ENCODE measurements at regions of chr2 and their contacts with region 1.

Region 1: GRCh38 chr2:172806493-172806892 is 70.8 kb downstream of the RAPGEF4 start:
- DNase-seq: no peak
- ATAC-seq: no peak
- H3K4me3 Mint-ChIP-seq: no peak overlapping the region
- H3K27ac Mint-ChIP-seq: no peak overlapping the region
- H3K4me1 Mint-ChIP-seq: no peaks in the 10 kb centered on the region
- H3K27me3 Mint-ChIP-seq: peaks cover 13% of the 10 kb centered on the region

Region 2: DNA sequence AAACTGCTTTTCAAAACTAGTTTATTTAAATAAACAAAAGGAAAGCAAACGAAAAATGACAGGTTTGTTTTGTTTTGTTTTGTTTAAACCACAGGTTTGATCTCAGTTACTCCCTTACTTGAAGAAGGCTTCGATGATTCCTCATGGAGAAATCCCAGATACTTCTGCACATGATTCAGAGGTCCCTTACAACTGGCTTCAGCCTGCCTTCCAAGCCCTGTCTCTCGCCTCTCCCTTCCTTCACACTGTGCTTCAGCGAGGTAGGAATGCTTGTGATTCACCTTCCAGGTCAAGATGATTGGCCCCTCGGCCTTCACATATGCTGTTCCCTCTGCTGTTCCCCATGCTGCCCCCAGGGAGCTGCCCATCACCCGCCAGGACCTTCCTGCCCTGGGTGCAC is 483.2 kb before region 1 on chr2:
- CTCF ChIA-PET with region 1: no interaction called
- DNase-seq: no peak
- ATAC-seq: no peak
- H3K4me3 Mint-ChIP-seq: no peak overlapping the region
- H3K27ac Mint-ChIP-seq: no peak overlapping the region
- H3K4me1 Mint-ChIP-seq: no peaks in the 10 kb centered on the region
- H3K27me3 Mint-ChIP-seq: no peaks in the 10 kb centered on the region

Region 3: GRCh38 chr2:172783091-172783898 is 23.2 kb before region 1 on chr2:
- CTCF ChIA-PET with region 1: no interaction called
- DNase-seq: no peak
- ATAC-seq: no peak
- H3K4me3 Mint-ChIP-seq: no peak overlapping the region
- H3K27ac Mint-ChIP-seq: no peak overlapping the region
- H3K4me1 Mint-ChIP-seq: no peaks in the 10 kb centered on the region
- H3K27me3 Mint-ChIP-seq: peaks cover 18% of the 10 kb centered on the region

Region 4: DNA sequence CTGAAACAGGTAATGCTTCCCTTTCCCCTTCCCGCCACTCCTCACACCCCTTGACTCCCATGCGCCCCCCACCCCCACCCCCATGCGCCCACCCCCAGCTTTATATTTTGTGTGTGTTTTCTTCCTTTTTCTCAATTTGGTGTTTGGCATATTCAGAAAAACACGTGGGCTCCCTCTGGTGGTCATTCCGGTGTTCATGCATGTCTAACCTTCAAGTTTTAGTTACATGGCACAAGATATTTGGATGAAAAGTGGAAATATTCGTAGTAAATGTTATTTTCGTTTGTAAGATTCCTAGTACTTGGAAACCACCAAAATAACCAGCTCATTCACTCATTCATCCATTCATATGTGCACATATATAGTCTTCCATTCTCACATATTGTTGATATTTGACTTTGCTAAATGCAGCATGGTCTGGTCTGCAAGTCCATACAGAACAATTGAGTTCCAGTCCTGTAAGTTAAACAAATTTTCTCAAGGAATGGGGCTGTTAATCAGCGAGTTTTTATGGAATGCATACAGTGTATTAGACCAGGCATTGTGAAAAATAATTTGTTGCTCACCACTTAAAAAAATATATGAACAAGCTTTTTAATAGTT is 125.5 kb after region 1 on chr2:
- CTCF ChIA-PET with region 1: interaction called, 29 read pairs
- DNase-seq: peak; percentile 67
- ATAC-seq: no peak
- H3K4me3 Mint-ChIP-seq: no peak overlapping the region
- H3K27ac Mint-ChIP-seq: no peak overlapping the region
- H3K4me1 Mint-ChIP-seq: peaks cover 1% of the 10 kb centered on the region
- H3K27me3 Mint-ChIP-seq: peaks cover 28% of the 10 kb centered on the region

Region 5: DNA sequence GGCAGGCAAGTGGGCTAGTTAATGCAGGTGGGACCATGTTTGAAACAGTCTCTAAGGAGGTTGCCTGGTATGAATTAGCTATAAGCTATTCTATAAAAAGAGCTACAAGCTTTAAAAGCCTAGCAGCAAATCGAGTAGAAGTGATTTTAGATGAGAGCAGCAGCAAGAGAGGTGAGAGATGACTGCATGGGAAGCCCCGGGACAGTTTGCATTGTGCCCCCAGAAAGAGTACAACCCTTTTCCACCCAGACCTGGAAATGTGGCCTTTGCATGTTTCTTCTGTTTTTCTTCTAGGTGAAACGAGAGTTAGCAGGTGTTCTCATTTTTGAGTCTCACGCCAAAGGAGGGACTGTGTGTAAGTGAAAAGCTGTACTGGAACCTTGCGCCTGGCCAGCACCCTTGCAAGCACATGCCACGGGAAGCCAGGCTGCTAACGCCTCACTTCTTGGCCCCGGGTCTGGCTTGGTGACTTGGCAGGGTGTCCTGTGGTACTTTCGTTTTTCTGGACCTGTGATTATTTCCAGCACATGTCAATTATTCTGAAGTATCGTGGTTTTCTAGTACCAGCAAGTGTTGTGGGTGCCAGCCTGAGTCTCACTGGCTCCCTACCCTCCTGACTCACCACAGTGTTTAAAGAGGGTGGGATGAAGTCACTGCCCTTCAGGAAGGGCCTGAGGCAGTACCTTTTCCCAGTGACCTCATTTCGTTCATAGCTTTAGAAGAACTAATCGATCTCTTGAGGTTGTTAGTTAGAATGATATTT is 178.8 kb after region 1 on chr2:
- CTCF ChIA-PET with region 1: no interaction called
- DNase-seq: no peak
- ATAC-seq: no peak
- H3K4me3 Mint-ChIP-seq: no peak overlapping the region
- H3K27ac Mint-ChIP-seq: no peak overlapping the region
- H3K4me1 Mint-ChIP-seq: peaks cover 9% of the 10 kb centered on the region
- H3K27me3 Mint-ChIP-seq: peaks cover 47% of the 10 kb centered on the region